ENCODE measurements at regions of chr2 and their contacts with region 1.

Region 1: GRCh38 chr2:157345647-157346389 is 20.2 kb upstream of the ERMN start:
- DNase-seq: no peak
- H3K4me3 ChIP-seq: no peak overlapping the region
- H3K27ac ChIP-seq: no peak overlapping the region
- H3K4me1 ChIP-seq: no peaks in the 10 kb centered on the region
- H3K27me3 ChIP-seq: no peaks in the 10 kb centered on the region
- CTCF ChIP-seq: no peak
- POLR2A ChIP-seq: no peak

Region 2: DNA sequence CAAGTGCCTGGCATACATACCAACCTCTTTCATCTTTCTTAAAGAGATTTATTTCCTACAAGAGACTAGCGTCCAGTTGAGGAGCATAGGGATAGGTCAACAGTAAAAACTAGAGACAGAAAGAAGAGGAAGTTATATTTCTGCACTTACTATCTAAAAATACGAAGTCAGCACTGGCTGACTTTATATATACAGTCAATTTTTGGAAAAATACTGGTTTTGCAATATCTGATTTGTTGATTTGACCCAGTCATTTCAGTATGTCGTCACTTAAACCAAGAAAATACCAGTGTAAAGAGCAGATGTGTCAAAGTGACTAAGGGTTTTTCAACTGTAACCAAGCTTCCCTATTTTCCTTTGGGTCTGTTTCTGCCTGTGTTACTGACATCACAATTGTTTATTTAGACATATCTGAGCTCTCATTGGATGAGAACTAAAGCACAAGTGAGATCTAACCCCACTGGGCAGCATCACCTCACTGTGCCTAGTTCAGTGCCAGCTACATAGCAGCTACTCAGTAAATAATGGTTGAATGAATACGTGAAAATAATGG is 75.0 kb after region 1 on chr2:
- intact Hi-C with region 1: loop called (anchors 2 kb)
- DNase-seq: no peak
- H3K4me3 ChIP-seq: no peak overlapping the region
- H3K27ac ChIP-seq: no peak overlapping the region
- H3K4me1 ChIP-seq: no peaks in the 10 kb centered on the region
- H3K27me3 ChIP-seq: no peaks in the 10 kb centered on the region
- CTCF ChIP-seq: no peak
- POLR2A ChIP-seq: no peak

Measured in breast epithelium (tissue), 4 donors.